Caco-2 (cell line): ENCODE measurements at regions of chr20 and their contacts with region 1.

Region 1: GRCh38 chr20:62386383-62387218 is at the start of gene RPS21:
- DNase-seq: peak; percentile 98
- H3K4me3 ChIP-seq: peak within 1 kb of the TSS; percentile 68
- H3K4me3 Mint-ChIP-seq: peak within 1 kb of the TSS; percentile 99
- H3K27ac Mint-ChIP-seq: peak within 1 kb of the TSS; percentile 95
- H3K4me1 ChIP-seq: peaks cover 19% of the 10 kb centered on the region
- H3K4me1 Mint-ChIP-seq: peaks cover 40% of the 10 kb centered on the region
- H3K27me3 ChIP-seq: no peaks in the 10 kb centered on the region
- H3K27me3 Mint-ChIP-seq: no peaks in the 10 kb centered on the region
- CTCF ChIP-seq: no peak
- total RNA-seq, gene RPS21: 4,496 and 4,723 TPM in 2 replicates

Region 2: DNA sequence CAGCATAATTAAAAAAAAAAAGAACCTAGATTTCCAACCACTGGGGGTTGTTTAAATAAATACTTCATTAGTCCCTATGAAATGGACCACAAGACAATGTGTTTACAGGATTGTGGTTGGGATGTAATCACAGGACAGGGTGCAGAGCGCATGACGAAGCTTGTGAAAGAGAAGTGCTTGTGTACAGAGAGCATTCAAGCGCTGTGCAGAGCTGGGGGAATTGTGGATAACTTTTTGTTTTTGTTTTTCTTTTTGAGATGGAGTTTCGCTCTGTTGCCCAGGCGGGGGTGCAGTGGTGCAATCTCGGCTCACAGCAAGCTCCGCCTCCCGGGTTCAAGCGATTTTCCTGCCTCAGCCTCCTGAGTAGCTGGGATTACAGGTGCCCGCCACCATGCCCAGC is 41.8 kb before region 1 on chr20:
- CTCF ChIA-PET with region 1: interaction called, 14 read pairs
- POLR2A ChIA-PET with region 1: interaction called, 3 read pairs
- intact Hi-C with region 1: loop called (anchors 5 kb)
- DNase-seq: no peak
- H3K4me3 ChIP-seq: no peak overlapping the region
- H3K4me3 Mint-ChIP-seq: no peak overlapping the region
- H3K27ac Mint-ChIP-seq: peak overlapping the region; percentile 64
- H3K4me1 ChIP-seq: peaks cover under 1% of the 10 kb centered on the region
- H3K4me1 Mint-ChIP-seq: peaks cover under 1% of the 10 kb centered on the region
- H3K27me3 ChIP-seq: no peaks in the 10 kb centered on the region
- H3K27me3 Mint-ChIP-seq: no peaks in the 10 kb centered on the region
- CTCF ChIP-seq: no peak

Region 3: GRCh38 chr20:62357187-62357667 is 29.4 kb before region 1 on chr20:
- CTCF ChIA-PET with region 1: interaction called, 188 read pairs
- POLR2A ChIA-PET with region 1: interaction called, 16 read pairs
- intact Hi-C with region 1: loop called (anchors 1 kb)
- DNase-seq: no peak
- H3K4me3 ChIP-seq: no peak overlapping the region
- H3K4me3 Mint-ChIP-seq: no peak overlapping the region
- H3K27ac Mint-ChIP-seq: peak overlapping the region; percentile 85
- H3K4me1 ChIP-seq: peaks cover 80% of the 10 kb centered on the region
- H3K4me1 Mint-ChIP-seq: peaks cover 19% of the 10 kb centered on the region
- H3K27me3 ChIP-seq: no peaks in the 10 kb centered on the region
- H3K27me3 Mint-ChIP-seq: no peaks in the 10 kb centered on the region
- CTCF ChIP-seq: no peak

Region 4: DNA sequence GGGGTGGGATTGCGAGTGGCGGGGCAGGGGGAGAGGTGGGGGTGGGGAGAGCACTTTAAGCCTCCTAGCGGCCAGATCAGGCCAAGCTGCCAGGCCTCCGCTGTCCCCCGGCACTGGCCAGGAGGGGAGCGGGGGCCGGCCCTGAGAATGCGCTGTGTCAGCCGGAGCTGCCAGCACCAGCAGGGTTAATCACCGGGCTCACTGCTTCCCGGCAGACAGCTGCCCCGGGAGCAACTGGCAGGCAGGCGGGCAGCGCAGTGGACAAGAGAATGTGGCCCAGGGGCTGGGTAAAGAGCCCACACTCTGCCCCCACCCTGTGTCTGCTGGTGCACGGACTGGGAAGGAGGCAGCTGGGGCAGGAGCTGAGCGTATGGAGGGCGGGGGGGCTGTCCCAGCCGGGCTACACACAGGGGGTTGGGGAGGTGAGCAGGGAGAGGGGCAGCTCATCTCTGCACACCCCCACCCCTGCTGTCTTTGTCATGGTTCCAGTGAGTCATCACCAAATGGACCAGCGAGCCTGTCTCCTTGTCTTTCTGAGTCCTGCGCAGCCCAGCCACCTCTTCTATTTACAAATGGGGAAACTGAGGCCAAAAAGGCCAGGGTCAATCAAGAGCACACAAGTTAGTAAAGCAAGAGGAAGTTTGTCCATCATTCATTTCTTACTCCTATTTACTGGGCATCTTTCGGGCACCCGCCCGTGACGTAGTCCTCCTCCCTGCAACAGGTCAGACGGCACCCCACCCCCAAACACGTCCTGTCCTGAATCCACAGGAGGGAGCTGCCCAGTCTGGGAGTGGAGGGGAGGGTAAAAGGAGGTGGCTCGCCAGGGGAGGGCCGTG is 17.4 kb before region 1 on chr20:
- CTCF ChIA-PET with region 1: interaction called, 188 read pairs
- POLR2A ChIA-PET with region 1: interaction called, 43 read pairs
- intact Hi-C with region 1: no loop called
- DNase-seq: peak in 1 of 2 experiments; percentile 72
- H3K4me3 ChIP-seq: peak overlapping the region; percentile 94
- H3K4me3 Mint-ChIP-seq: peak overlapping the region; percentile 70
- H3K27ac Mint-ChIP-seq: peak overlapping the region; percentile 90
- H3K4me1 ChIP-seq: peaks cover 55% of the 10 kb centered on the region
- H3K4me1 Mint-ChIP-seq: peaks cover 39% of the 10 kb centered on the region
- H3K27me3 ChIP-seq: no peaks in the 10 kb centered on the region
- H3K27me3 Mint-ChIP-seq: no peaks in the 10 kb centered on the region
- CTCF ChIP-seq: peak; percentile 54 to 77

Region 5: GRCh38 chr20:62407221-62407992 is 20.8 kb after region 1 on chr20 and contains the start of gene CABLES2:
- CTCF ChIA-PET with region 1: interaction called, 8 read pairs
- POLR2A ChIA-PET with region 1: interaction called, 4 read pairs
- intact Hi-C with region 1: loop called (anchors 1 kb)
- DNase-seq: peak; percentile 99 to 100
- H3K4me3 ChIP-seq: peak within 1 kb of the TSS; percentile 95
- H3K4me3 Mint-ChIP-seq: peak within 1 kb of the TSS; percentile 78
- H3K27ac Mint-ChIP-seq: peak within 1 kb of the TSS; percentile 83
- H3K4me1 ChIP-seq: peaks cover 58% of the 10 kb centered on the region
- H3K4me1 Mint-ChIP-seq: peaks cover 41% of the 10 kb centered on the region
- H3K27me3 ChIP-seq: no peaks in the 10 kb centered on the region
- H3K27me3 Mint-ChIP-seq: no peaks in the 10 kb centered on the region
- CTCF ChIP-seq: peak in 1 of 2 experiments; percentile 54
- total RNA-seq, gene CABLES2: 30.7 and 36.4 TPM in 2 replicates

Region 6: DNA sequence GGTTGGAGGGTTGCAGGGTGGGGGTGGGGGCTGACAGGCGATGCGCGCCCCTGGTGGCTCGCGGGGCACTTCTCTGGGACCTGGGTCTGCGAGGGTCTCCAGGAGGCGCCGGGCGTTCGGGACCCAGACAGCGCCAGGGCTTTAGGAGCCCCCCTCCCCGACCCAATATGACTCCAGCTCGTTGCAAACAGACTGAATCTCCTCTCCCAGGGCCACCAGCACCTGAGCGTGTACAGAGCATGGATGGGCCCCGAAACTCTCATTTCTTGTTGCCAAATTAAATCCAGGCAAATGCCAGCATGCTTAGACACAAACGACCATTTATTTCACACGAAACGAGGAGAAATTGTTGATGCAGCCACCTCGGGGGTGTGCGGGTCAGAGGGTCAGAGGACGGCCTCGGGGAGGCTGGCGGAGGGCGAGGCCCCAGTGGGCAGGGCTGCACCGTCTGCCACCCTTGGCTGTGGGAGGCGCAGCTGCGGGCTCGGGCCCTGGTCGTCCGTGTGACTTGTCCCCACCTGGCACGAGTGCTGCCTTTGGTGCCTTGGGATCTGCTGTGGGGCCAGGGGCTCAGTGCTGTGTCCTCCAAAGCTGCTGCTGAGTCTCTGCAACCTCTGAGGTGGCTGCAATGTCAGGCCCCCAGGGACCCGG is 110.1 kb after region 1 on chr20:
- CTCF ChIA-PET with region 1: no interaction called
- POLR2A ChIA-PET with region 1: no interaction called
- intact Hi-C with region 1: no loop called
- DNase-seq: peak in 1 of 2 experiments; percentile 65
- H3K4me3 ChIP-seq: no peak overlapping the region
- H3K4me3 Mint-ChIP-seq: no peak overlapping the region
- H3K27ac Mint-ChIP-seq: peak overlapping the region; percentile 29
- H3K4me1 ChIP-seq: peaks cover 39% of the 10 kb centered on the region
- H3K4me1 Mint-ChIP-seq: peaks cover 7% of the 10 kb centered on the region
- H3K27me3 ChIP-seq: no peaks in the 10 kb centered on the region
- H3K27me3 Mint-ChIP-seq: no peaks in the 10 kb centered on the region
- CTCF ChIP-seq: peak; percentile 71 to 95